ENCODE measurements at regions of chr3 and their contacts with region 1.

Region 1: DNA sequence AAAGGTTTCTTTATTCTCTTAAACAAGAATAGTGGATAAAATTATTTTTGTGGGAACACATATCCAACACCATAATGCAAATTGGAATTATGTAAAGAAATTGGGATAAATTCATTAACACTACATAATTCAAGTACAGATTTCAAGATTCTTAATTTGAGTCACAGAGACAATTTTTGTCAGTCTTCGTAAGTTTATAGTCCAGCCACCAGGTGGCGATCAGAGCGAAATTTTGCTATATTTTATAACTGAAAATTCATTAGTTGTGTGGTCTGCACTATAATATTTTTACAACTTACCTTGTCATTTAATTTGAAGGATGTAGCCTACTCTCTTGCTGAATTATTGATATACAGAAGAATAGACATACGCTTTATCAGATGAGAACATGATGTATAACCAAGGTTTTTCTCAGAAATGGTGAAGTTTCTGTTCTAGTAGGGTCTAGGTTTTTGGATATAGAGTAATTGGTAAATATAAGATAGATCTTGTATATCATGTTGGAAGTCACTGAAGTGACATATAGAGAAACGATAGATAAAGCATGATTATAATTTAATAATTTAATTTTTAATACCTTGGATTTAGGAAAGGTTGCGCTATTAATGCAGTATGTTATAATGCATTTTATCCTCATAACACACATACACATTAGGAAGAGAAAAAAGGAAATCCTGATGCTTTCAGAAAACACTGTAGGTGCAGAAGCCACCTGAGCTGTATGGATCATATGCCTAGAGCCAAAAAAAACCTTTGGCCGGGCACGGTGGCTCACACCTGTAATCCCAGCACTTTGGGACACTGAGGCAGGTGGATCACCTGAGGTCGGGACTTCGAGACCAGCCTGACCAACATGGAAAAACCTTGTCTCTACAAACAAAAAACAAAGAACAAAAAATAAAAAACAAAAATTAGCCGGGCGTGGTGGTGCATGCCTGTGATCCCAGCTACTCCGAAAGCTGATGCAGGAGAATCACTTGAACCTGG is 31.7 kb downstream of the PLSCR4 start:
- DNase-seq: no peak
- ATAC-seq: no peak
- H3K4me3 Mint-ChIP-seq: no peak overlapping the region
- H3K27ac Mint-ChIP-seq: no peak overlapping the region
- H3K4me1 Mint-ChIP-seq: no peaks in the 10 kb centered on the region
- H3K27me3 Mint-ChIP-seq: peaks cover 4% of the 10 kb centered on the region
- CTCF ChIP-seq: peak; percentile 80

Region 2: GRCh38 chr3:145209561-145209960 is 1009.6 kb before region 1 on chr3:
- CTCF ChIA-PET with region 1: no interaction called
- POLR2A ChIA-PET with region 1: no interaction called
- intact Hi-C with region 1: no loop called
- DNase-seq: no peak
- ATAC-seq: no peak
- H3K4me3 Mint-ChIP-seq: no peak overlapping the region
- H3K27ac Mint-ChIP-seq: no peak overlapping the region
- H3K4me1 Mint-ChIP-seq: no peaks in the 10 kb centered on the region
- H3K27me3 Mint-ChIP-seq: no peaks in the 10 kb centered on the region
- CTCF ChIP-seq: no peak

Region 3: GRCh38 chr3:146065573-146066006 is 153.6 kb before region 1 on chr3:
- CTCF ChIA-PET with region 1: no interaction called
- POLR2A ChIA-PET with region 1: no interaction called
- intact Hi-C with region 1: loop called (anchors 5 kb)
- DNase-seq: no peak
- ATAC-seq: no peak
- H3K4me3 Mint-ChIP-seq: no peak overlapping the region
- H3K27ac Mint-ChIP-seq: no peak overlapping the region
- H3K4me1 Mint-ChIP-seq: no peaks in the 10 kb centered on the region
- H3K27me3 Mint-ChIP-seq: no peaks in the 10 kb centered on the region
- CTCF ChIP-seq: peak; percentile 91

Region 4: DNA sequence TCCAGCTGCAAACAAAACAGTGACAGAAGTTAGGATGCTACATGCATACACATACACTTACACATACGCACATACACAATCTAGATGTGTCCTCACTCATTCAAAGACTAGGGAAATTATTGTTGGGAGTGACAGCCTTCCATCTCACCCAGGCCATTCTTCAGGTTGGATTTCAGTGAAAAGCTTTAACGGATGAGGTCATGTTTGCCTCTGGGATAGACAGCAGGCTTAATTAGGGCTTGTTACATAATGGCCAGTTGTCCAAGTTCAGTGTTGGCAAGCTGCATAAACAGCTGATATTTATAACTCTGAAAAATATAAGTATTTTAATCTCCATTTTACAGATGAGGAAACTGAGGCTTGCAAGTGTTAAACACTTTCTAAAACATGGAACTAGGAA is 22.4 kb before region 1 on chr3:
- CTCF ChIA-PET with region 1: no interaction called
- POLR2A ChIA-PET with region 1: no interaction called
- intact Hi-C with region 1: no loop called
- DNase-seq: no peak
- ATAC-seq: no peak
- H3K4me3 Mint-ChIP-seq: no peak overlapping the region
- H3K27ac Mint-ChIP-seq: no peak overlapping the region
- H3K4me1 Mint-ChIP-seq: no peaks in the 10 kb centered on the region
- H3K27me3 Mint-ChIP-seq: no peaks in the 10 kb centered on the region
- CTCF ChIP-seq: no peak

Measured in activated B cell treated with CpG ODN at 0.5 μM for 24 hours (primary cell).